ENCODE measurements at regions of chr17 and their contacts with region 1.

Region 1: GRCh38 chr17:13114601-13115031 is 96.8 kb upstream of the ELAC2 start:
- DNase-seq: peak; percentile 77
- H3K4me3 ChIP-seq: peak overlapping the region; percentile 13
- CTCF ChIP-seq: peak; percentile 99

Region 2: GRCh38 chr17:12963505-12963904 is 151.1 kb before region 1 on chr17:
- CTCF ChIA-PET with region 1: no interaction called
- POLR2A ChIA-PET with region 1: no interaction called
- DNase-seq: no peak
- H3K4me3 ChIP-seq: no peak overlapping the region
- CTCF ChIP-seq: no peak

Region 3: DNA sequence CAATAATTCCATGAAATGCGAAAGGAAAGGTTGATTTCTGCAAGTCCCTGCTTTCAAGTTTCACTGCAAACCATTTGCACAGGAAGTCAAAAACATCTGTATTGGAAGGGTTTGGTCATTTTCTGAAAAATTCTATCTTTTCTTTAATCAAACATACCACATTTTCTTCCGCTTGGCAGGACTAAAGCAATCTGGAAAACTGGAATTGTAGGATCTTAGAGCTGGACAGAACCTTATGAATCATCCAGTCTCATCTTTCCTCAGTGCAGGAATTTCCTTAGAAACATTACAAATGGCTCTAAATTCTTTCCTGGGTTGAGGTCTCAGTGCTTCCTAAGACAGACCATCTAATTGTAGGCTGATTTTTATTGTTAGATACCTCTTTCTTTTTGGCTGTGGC is 14.7 kb after region 1 on chr17:
- CTCF ChIA-PET with region 1: interaction called, 18 read pairs
- POLR2A ChIA-PET with region 1: no interaction called
- DNase-seq: no peak
- H3K4me3 ChIP-seq: no peak overlapping the region
- CTCF ChIP-seq: no peak

Region 4: DNA sequence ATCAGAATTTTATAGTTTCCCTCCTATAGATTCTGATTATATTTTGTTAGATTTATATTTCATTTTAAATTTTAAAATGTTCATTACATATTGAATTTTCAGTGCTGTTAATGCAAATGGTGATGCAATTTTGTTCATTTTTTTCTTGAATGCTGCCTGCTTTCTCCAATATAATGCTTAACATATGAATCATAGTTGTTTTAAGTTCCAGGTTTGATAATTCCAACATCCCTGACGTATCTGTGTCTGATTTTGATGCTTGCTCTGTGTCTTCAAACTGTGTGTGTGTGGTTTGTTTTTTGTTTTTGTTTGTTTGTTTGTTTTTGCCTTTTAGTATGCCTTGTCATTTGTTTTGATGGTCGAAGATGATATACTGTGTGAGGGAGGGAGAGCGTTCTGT is 37.9 kb after region 1 on chr17:
- CTCF ChIA-PET with region 1: no interaction called
- POLR2A ChIA-PET with region 1: no interaction called
- DNase-seq: peak; percentile 31
- H3K4me3 ChIP-seq: no peak overlapping the region
- CTCF ChIP-seq: no peak

Measured in AG04449 (cell line).